Activated B cell treated with CpG ODN at 0.5 μM for 24 hours (primary cell): ENCODE measurements at regions of chr12 and their contacts with region 1.

Region 1: GRCh38 chr12:54993161-54993835 is 8.7 kb upstream of the TESPA1 start:
- DNase-seq: no peak
- ATAC-seq: peak; percentile 68
- H3K4me3 Mint-ChIP-seq: no peak overlapping the region
- H3K27ac Mint-ChIP-seq: no peak overlapping the region
- H3K4me1 Mint-ChIP-seq: peaks cover 43% of the 10 kb centered on the region
- H3K27me3 Mint-ChIP-seq: no peaks in the 10 kb centered on the region
- CTCF ChIP-seq: peak; percentile 75

Region 2: GRCh38 chr12:54749191-54749818 is 244.0 kb before region 1 on chr12:
- CTCF ChIA-PET with region 1: interaction called, 19 read pairs
- POLR2A ChIA-PET with region 1: no interaction called
- intact Hi-C with region 1: loop called (anchors 1 kb)
- DNase-seq: no peak
- ATAC-seq: peak; percentile 54
- H3K4me3 Mint-ChIP-seq: no peak overlapping the region
- H3K27ac Mint-ChIP-seq: no peak overlapping the region
- H3K4me1 Mint-ChIP-seq: peaks cover 3% of the 10 kb centered on the region
- H3K27me3 Mint-ChIP-seq: peaks cover 2% of the 10 kb centered on the region
- CTCF ChIP-seq: peak; percentile 75

Region 3: GRCh38 chr12:54958048-54958658 is 35.1 kb before region 1 on chr12:
- CTCF ChIA-PET with region 1: interaction called, 10 read pairs
- POLR2A ChIA-PET with region 1: no interaction called
- intact Hi-C with region 1: no loop called
- DNase-seq: no peak
- ATAC-seq: no peak
- H3K4me3 Mint-ChIP-seq: no peak overlapping the region
- H3K27ac Mint-ChIP-seq: no peak overlapping the region
- H3K4me1 Mint-ChIP-seq: peaks cover 27% of the 10 kb centered on the region
- H3K27me3 Mint-ChIP-seq: no peaks in the 10 kb centered on the region
- CTCF ChIP-seq: no peak

Region 4: GRCh38 chr12:55142669-55143565 is 149.6 kb after region 1 on chr12:
- CTCF ChIA-PET with region 1: interaction called, 40 read pairs
- POLR2A ChIA-PET with region 1: no interaction called
- intact Hi-C with region 1: loop called (anchors 1 kb)
- DNase-seq: no peak
- ATAC-seq: no peak
- H3K4me3 Mint-ChIP-seq: no peak overlapping the region
- H3K27ac Mint-ChIP-seq: no peak overlapping the region
- H3K4me1 Mint-ChIP-seq: peaks cover 5% of the 10 kb centered on the region
- H3K27me3 Mint-ChIP-seq: peaks cover 3% of the 10 kb centered on the region
- CTCF ChIP-seq: no peak

Region 5: DNA sequence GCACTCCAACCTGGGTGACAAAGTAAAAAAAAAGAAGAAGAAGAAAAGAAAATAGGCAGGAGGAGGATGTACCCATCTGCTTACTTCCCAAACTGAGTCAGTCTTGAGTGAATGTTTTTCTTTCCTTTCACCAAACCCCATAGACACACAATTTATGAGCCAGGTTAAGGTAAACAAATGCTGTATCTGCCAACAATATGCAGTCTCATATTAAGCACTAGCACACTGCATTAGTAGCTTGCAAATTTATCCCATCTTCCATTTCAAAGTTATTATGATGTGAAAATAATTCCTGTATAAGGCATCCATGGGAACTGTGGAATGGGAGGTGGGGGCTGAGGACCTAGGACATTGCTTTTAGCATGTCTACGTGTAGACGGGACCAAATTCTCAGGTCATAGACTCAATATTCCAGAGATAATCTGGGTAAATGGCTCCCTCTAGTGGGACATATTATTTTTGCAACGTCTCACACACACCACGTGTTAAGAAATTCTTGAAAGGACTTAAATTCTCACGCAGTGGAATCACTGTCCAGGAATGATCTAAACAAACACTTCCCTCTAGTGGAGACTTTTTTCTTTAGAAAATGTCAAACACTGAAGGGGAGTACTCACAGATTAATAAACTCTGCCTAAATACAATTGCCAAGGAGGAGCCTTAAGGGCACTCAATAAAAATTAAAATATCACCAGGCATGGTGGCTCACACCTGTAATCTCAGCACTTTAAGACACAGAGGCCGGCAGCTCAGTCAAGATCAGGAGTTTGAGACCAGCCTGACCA is 626.2 kb after region 1 on chr12:
- CTCF ChIA-PET with region 1: no interaction called
- POLR2A ChIA-PET with region 1: no interaction called
- intact Hi-C with region 1: loop called (anchors 1 kb)
- DNase-seq: no peak
- ATAC-seq: peak; percentile 87
- H3K4me3 Mint-ChIP-seq: no peak overlapping the region
- H3K27ac Mint-ChIP-seq: no peak overlapping the region
- H3K4me1 Mint-ChIP-seq: no peaks in the 10 kb centered on the region
- H3K27me3 Mint-ChIP-seq: peaks cover 13% of the 10 kb centered on the region
- CTCF ChIP-seq: no peak